CD4-positive, alpha-beta memory T cell (primary cell): ENCODE measurements at regions of chr7 and their contacts with region 1.

Region 1: GRCh38 chr7:105154084-105154483 is 140.1 kb downstream of the KMT2E start:
- DNase-seq: no peak
- H3K4me3 ChIP-seq: no peak overlapping the region
- H3K4me3 Mint-ChIP-seq: no peak overlapping the region
- H3K27ac ChIP-seq: no peak overlapping the region
- H3K27ac Mint-ChIP-seq: peak overlapping the region in 3 of 7 donors; percentile 30 to 41 (median 32)
- H3K4me1 ChIP-seq: peaks cover 6% of the 10 kb centered on the region
- H3K4me1 Mint-ChIP-seq: peaks cover 0 to 13% (median 3%) of the 10 kb centered on the region in 4 donors
- H3K27me3 ChIP-seq: no peaks in the 10 kb centered on the region
- H3K27me3 Mint-ChIP-seq: no peaks in the 10 kb centered on the region

Region 2: GRCh38 chr7:105336009-105336408 is 181.9 kb after region 1 on chr7:
- CTCF ChIA-PET with region 1: interaction called, 3 read pairs
- POLR2A ChIA-PET with region 1: no interaction called
- intact Hi-C with region 1: loop called (anchors 1 kb)
- DNase-seq: peak in 3 of 5 donors; percentile 17 to 34 (median 22)
- H3K4me3 ChIP-seq: no peak overlapping the region
- H3K4me3 Mint-ChIP-seq: no peak overlapping the region
- H3K27ac ChIP-seq: no peak overlapping the region
- H3K27ac Mint-ChIP-seq: no peak overlapping the region
- H3K4me1 ChIP-seq: peaks cover 13% of the 10 kb centered on the region
- H3K4me1 Mint-ChIP-seq: peaks cover 19 to 31% (median 26%) of the 10 kb centered on the region in 4 donors
- H3K27me3 ChIP-seq: no peaks in the 10 kb centered on the region
- H3K27me3 Mint-ChIP-seq: no peaks in the 10 kb centered on the region

Region 3: GRCh38 chr7:105487579-105488571 is 333.8 kb after region 1 on chr7:
- CTCF ChIA-PET with region 1: interaction called, 3 read pairs
- POLR2A ChIA-PET with region 1: no interaction called
- intact Hi-C with region 1: loop called (anchors 1 kb)
- DNase-seq: peak in 4 of 5 donors; percentile 28 to 40 (median 30)
- H3K4me3 ChIP-seq: no peak overlapping the region
- H3K4me3 Mint-ChIP-seq: no peak overlapping the region
- H3K27ac ChIP-seq: no peak overlapping the region
- H3K27ac Mint-ChIP-seq: peak overlapping the region in 3 of 7 donors; percentile 0 to 86 (median 33)
- H3K4me1 ChIP-seq: no peaks in the 10 kb centered on the region
- H3K4me1 Mint-ChIP-seq: peaks cover 0 to 4% (median 3%) of the 10 kb centered on the region in 4 donors
- H3K27me3 ChIP-seq: no peaks in the 10 kb centered on the region
- H3K27me3 Mint-ChIP-seq: no peaks in the 10 kb centered on the region